ENCODE measurements at regions of chr4 and their contacts with region 1.

Region 1: GRCh38 chr4:80215449-80216052 is 18.2 kb downstream of the PRDM8 start:
- DNase-seq: no peak
- ATAC-seq: no peak
- H3K4me3 ChIP-seq: no peak overlapping the region
- H3K27ac ChIP-seq: no peak overlapping the region
- H3K4me1 ChIP-seq: no peaks in the 10 kb centered on the region
- H3K27me3 ChIP-seq: peaks cover 0 to 10% (median 2%) of the 10 kb centered on the region in 3 donors
- CTCF ChIP-seq: peak in 4 of 5 experiments; percentile 44 to 70 (median 61)
- POLR2A ChIP-seq: no peak

Region 2: GRCh38 chr4:78939667-78940008 is 1275.9 kb before region 1 on chr4:
- in situ Hi-C with region 1: loop called in 1 of 4 experiments (anchors 10 kb)
- intact Hi-C with region 1: no loop called
- DNase-seq: no peak
- ATAC-seq: peak; percentile 4 to 27
- H3K4me3 ChIP-seq: peak overlapping the region; percentile 69 to 95 (median 78)
- H3K27ac ChIP-seq: peak overlapping the region; percentile 56 to 78 (median 66)
- H3K4me1 ChIP-seq: peaks cover 0 to 10% of the 10 kb centered on the region in 2 donors
- H3K27me3 ChIP-seq: no peaks in the 10 kb centered on the region
- CTCF ChIP-seq: no peak
- POLR2A ChIP-seq: no peak

Region 3: GRCh38 chr4:78951862-78952472 is 1263.6 kb before region 1 on chr4:
- in situ Hi-C with region 1: loop called (anchors 10 to 25 kb)
- intact Hi-C with region 1: loop called (anchors 2 kb)
- DNase-seq: peak in 1 of 2 donors; percentile 13
- ATAC-seq: peak; percentile 78
- H3K4me3 ChIP-seq: no peak overlapping the region
- H3K27ac ChIP-seq: no peak overlapping the region
- H3K4me1 ChIP-seq: no peaks in the 10 kb centered on the region
- H3K27me3 ChIP-seq: no peaks in the 10 kb centered on the region
- CTCF ChIP-seq: peak; percentile 54 to 69 (median 66)
- POLR2A ChIP-seq: no peak

Region 4: DNA sequence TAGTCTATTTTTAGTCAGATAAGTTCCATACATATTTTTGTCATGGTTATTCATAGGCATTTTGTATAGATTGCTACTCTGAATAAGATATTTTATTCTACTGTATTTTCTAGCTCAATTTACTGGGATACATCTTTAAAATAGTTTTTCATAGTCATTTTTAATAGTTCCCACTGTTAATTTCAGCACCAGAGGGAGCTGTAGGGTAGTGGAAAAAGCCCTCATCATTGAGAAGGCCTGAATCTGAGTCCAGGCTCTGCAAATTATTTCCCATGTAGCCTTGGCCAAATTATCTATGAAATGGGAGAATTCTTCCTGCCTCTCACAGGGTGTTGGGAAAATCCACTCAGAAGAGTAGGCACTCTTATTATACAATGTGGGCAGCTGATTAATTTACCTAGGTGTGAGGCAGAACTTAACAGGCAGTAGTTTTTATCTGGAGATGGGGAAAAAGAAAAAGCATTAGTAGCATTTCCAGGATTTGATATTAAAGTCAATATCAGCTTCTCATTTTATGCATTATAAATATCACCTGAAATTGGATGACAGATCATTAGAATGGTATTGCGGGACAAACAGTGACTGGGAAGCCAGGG is 1173.4 kb before region 1 on chr4:
- in situ Hi-C with region 1: no loop called
- intact Hi-C with region 1: loop called (anchors 10 kb)
- DNase-seq: no peak
- ATAC-seq: peak; percentile 72 to 81
- H3K4me3 ChIP-seq: no peak overlapping the region
- H3K27ac ChIP-seq: no peak overlapping the region
- H3K4me1 ChIP-seq: peaks cover 0 to 5% of the 10 kb centered on the region in 2 donors
- H3K27me3 ChIP-seq: no peaks in the 10 kb centered on the region
- CTCF ChIP-seq: peak; percentile 27 to 54 (median 52)
- POLR2A ChIP-seq: no peak

Region 5: GRCh38 chr4:80173401-80173800 is 42.1 kb before region 1 on chr4:
- in situ Hi-C with region 1: no loop called
- intact Hi-C with region 1: no loop called
- DNase-seq: no peak
- ATAC-seq: no peak
- H3K4me3 ChIP-seq: no peak overlapping the region
- H3K27ac ChIP-seq: no peak overlapping the region
- H3K4me1 ChIP-seq: no peaks in the 10 kb centered on the region
- H3K27me3 ChIP-seq: peaks cover 0 to 3% (median 0%) of the 10 kb centered on the region in 3 donors
- CTCF ChIP-seq: no peak
- POLR2A ChIP-seq: no peak

Region 6: DNA sequence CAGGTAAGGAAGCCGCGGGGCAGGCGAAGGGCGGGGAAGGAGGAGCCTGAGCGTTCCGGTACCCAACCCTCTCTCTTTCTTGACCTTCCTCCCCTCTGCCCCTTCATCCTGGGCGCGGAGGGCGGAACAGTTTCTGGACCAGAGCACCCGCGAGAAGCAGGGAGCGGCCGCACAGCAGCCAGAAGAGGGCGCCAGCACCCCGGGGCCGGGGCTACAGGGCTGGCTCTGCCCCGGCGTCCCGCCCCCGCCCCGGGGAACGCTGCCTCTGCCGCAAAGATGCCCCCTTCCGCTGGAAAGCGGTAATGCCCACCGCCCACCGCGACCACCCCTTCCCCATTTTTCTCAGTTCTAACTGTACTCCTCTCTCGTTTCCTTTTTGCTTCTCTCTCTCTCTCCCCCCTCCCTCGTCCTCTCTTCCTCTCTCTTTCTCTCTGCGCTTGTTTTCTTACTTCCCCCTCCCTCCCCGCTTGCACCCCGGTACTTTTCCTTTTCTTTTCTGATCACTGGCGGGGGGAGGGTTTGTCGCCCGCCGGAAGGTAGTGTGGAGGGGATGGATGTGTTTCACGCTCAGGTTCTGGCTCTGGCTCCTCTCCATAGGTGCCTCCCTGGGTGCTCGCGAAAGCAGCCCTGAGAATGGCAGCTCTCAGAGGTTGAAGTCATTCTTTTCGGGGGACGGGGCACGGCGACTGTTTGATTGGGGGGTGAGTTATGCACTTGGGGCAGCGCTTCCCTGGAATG is 31.3 kb before region 1 on chr4:
- in situ Hi-C with region 1: no loop called
- intact Hi-C with region 1: loop called (anchors 5 kb)
- DNase-seq: peak; percentile 57 to 66
- ATAC-seq: peak; percentile 73 to 78
- H3K4me3 ChIP-seq: peak overlapping the region; percentile 55 to 80 (median 58)
- H3K27ac ChIP-seq: peak overlapping the region; percentile 61 to 75 (median 66)
- H3K4me1 ChIP-seq: peaks cover 17 to 24% of the 10 kb centered on the region in 2 donors
- H3K27me3 ChIP-seq: peaks cover 60 to 64% (median 63%) of the 10 kb centered on the region in 3 donors
- CTCF ChIP-seq: peak; percentile 36 to 75 (median 62)
- POLR2A ChIP-seq: no peak

Region 7: GRCh38 chr4:80202190-80202711 is 13.3 kb before region 1 on chr4:
- in situ Hi-C with region 1: no loop called
- intact Hi-C with region 1: loop called (anchors 1 kb)
- DNase-seq: peak in 1 of 2 donors; percentile 64
- ATAC-seq: peak; percentile 44 to 75
- H3K4me3 ChIP-seq: peak overlapping the region; percentile 54 to 79 (median 62)
- H3K27ac ChIP-seq: peak overlapping the region; percentile 48 to 66 (median 52)
- H3K4me1 ChIP-seq: peaks cover 5 to 10% of the 10 kb centered on the region in 2 donors
- H3K27me3 ChIP-seq: peaks cover 55 to 56% (median 56%) of the 10 kb centered on the region in 3 donors
- CTCF ChIP-seq: peak; percentile 37 to 84 (median 78)
- POLR2A ChIP-seq: no peak

Measured in gastrocnemius medialis (tissue), 4 donors.